ENCODE measurements at regions of chr5 and their contacts with region 1.

Region 1: GRCh38 chr5:157312492-157312891 is 46.6 kb downstream of the CYFIP2 start:
- DNase-seq: peak; percentile 55 to 71 (median 61)
- H3K4me3 ChIP-seq: no peak overlapping the region
- H3K4me3 Mint-ChIP-seq: peak overlapping the region in 1 of 8 donors; percentile 2
- H3K27ac ChIP-seq: no peak overlapping the region
- H3K27ac Mint-ChIP-seq: peak overlapping the region; percentile 24 to 94 (median 77)
- H3K4me1 ChIP-seq: peaks cover 33% of the 10 kb centered on the region
- H3K4me1 Mint-ChIP-seq: peaks cover 23 to 42% (median 34%) of the 10 kb centered on the region in 4 donors
- H3K27me3 ChIP-seq: no peaks in the 10 kb centered on the region
- H3K27me3 Mint-ChIP-seq: no peaks in the 10 kb centered on the region

Region 2: GRCh38 chr5:157189223-157189622 is 123.3 kb before region 1 on chr5:
- CTCF ChIA-PET with region 1: interaction called, 5 read pairs
- POLR2A ChIA-PET with region 1: interaction called, 13 read pairs
- intact Hi-C with region 1: no loop called
- DNase-seq: no peak
- H3K4me3 ChIP-seq: peak overlapping the region; percentile 44 to 59
- H3K4me3 Mint-ChIP-seq: peak overlapping the region; percentile 84 to 100 (median 96)
- H3K27ac ChIP-seq: peak overlapping the region; percentile 64
- H3K27ac Mint-ChIP-seq: peak overlapping the region; percentile 84 to 97 (median 93)
- H3K4me1 ChIP-seq: peaks cover 97% of the 10 kb centered on the region
- H3K4me1 Mint-ChIP-seq: peaks cover 66 to 91% (median 78%) of the 10 kb centered on the region in 4 donors
- H3K27me3 ChIP-seq: no peaks in the 10 kb centered on the region
- H3K27me3 Mint-ChIP-seq: no peaks in the 10 kb centered on the region

Region 3: GRCh38 chr5:157259699-157260098 is 52.8 kb before region 1 on chr5:
- CTCF ChIA-PET with region 1: interaction called, 237 read pairs
- POLR2A ChIA-PET with region 1: interaction called, 41 read pairs
- intact Hi-C with region 1: no loop called
- DNase-seq: no peak
- H3K4me3 ChIP-seq: no peak overlapping the region
- H3K4me3 Mint-ChIP-seq: peak overlapping the region in 4 of 8 donors; percentile 0 to 57 (median 20)
- H3K27ac ChIP-seq: no peak overlapping the region
- H3K27ac Mint-ChIP-seq: peak overlapping the region in 6 of 7 donors; percentile 3 to 76 (median 50)
- H3K4me1 ChIP-seq: peaks cover 61% of the 10 kb centered on the region
- H3K4me1 Mint-ChIP-seq: peaks cover 59 to 84% (median 76%) of the 10 kb centered on the region in 4 donors
- H3K27me3 ChIP-seq: no peaks in the 10 kb centered on the region
- H3K27me3 Mint-ChIP-seq: no peaks in the 10 kb centered on the region

Region 4: DNA sequence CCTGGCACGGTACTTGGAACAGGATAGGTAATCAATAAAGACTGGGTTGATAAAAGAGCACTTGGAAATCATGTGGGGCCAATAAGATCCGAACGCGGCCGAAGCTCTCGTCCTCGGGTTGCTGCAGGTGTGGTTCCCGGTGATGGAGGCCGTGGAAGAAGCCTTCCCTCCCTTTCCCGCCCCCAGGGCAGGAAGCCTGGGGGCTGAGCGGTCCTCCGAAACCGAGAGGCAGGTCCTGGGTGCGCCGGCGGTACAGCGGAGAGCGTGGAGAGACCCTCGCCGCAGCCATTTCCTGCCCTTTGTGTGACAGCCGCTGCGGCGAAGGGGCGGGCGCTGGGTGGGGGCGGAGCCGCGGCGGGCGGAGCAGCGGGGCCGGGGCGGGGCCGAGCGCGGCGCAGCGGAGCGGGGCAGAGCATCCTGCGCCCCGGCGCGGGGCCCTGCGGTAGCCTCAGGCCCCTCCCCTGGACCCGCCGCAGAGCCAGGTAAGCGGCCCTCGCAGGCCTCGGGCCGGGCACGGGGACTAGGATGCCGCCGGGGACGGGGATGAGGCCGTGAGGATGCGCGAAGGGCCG is 46.7 kb before region 1 on chr5 and contains the start of gene CYFIP2:
- CTCF ChIA-PET with region 1: interaction called, 15 read pairs
- POLR2A ChIA-PET with region 1: interaction called, 41 read pairs
- intact Hi-C with region 1: loop called (anchors 1 kb)
- DNase-seq: peak; percentile 84 to 88 (median 85)
- H3K4me3 ChIP-seq: peak within 1 kb of the TSS; percentile 62 to 75
- H3K4me3 Mint-ChIP-seq: peak within 1 kb of the TSS; percentile 95 to 100 (median 97)
- H3K27ac ChIP-seq: peak within 1 kb of the TSS; percentile 78
- H3K27ac Mint-ChIP-seq: peak within 1 kb of the TSS; percentile 97 to 99 (median 98)
- H3K4me1 ChIP-seq: peaks cover 65% of the 10 kb centered on the region
- H3K4me1 Mint-ChIP-seq: peaks cover 48 to 82% (median 66%) of the 10 kb centered on the region in 4 donors
- H3K27me3 ChIP-seq: no peaks in the 10 kb centered on the region
- H3K27me3 Mint-ChIP-seq: no peaks in the 10 kb centered on the region
- total RNA-seq, gene CYFIP2: 317 to 325 TPM

Region 5: GRCh38 chr5:157290981-157291711 is 21.3 kb before region 1 on chr5:
- CTCF ChIA-PET with region 1: interaction called, 11 read pairs
- POLR2A ChIA-PET with region 1: interaction called, 4 read pairs
- intact Hi-C with region 1: loop called (anchors 2 kb)
- DNase-seq: no peak
- H3K4me3 ChIP-seq: no peak overlapping the region
- H3K4me3 Mint-ChIP-seq: no peak overlapping the region
- H3K27ac ChIP-seq: no peak overlapping the region
- H3K27ac Mint-ChIP-seq: peak overlapping the region; percentile 22 to 83 (median 71)
- H3K4me1 ChIP-seq: peaks cover 53% of the 10 kb centered on the region
- H3K4me1 Mint-ChIP-seq: peaks cover 36 to 71% (median 49%) of the 10 kb centered on the region in 4 donors
- H3K27me3 ChIP-seq: no peaks in the 10 kb centered on the region
- H3K27me3 Mint-ChIP-seq: no peaks in the 10 kb centered on the region

Region 6: GRCh38 chr5:157328277-157328912 is 15.9 kb after region 1 on chr5:
- CTCF ChIA-PET with region 1: interaction called, 52 read pairs
- POLR2A ChIA-PET with region 1: interaction called, 3 read pairs
- intact Hi-C with region 1: no loop called
- DNase-seq: peak; percentile 66 to 69 (median 67)
- H3K4me3 ChIP-seq: no peak overlapping the region
- H3K4me3 Mint-ChIP-seq: peak overlapping the region; percentile 3 to 69 (median 58)
- H3K27ac ChIP-seq: peak overlapping the region; percentile 30
- H3K27ac Mint-ChIP-seq: peak overlapping the region; percentile 72 to 96 (median 89)
- H3K4me1 ChIP-seq: peaks cover 27% of the 10 kb centered on the region
- H3K4me1 Mint-ChIP-seq: peaks cover 23 to 44% (median 26%) of the 10 kb centered on the region in 4 donors
- H3K27me3 ChIP-seq: no peaks in the 10 kb centered on the region
- H3K27me3 Mint-ChIP-seq: no peaks in the 10 kb centered on the region

Region 7: DNA sequence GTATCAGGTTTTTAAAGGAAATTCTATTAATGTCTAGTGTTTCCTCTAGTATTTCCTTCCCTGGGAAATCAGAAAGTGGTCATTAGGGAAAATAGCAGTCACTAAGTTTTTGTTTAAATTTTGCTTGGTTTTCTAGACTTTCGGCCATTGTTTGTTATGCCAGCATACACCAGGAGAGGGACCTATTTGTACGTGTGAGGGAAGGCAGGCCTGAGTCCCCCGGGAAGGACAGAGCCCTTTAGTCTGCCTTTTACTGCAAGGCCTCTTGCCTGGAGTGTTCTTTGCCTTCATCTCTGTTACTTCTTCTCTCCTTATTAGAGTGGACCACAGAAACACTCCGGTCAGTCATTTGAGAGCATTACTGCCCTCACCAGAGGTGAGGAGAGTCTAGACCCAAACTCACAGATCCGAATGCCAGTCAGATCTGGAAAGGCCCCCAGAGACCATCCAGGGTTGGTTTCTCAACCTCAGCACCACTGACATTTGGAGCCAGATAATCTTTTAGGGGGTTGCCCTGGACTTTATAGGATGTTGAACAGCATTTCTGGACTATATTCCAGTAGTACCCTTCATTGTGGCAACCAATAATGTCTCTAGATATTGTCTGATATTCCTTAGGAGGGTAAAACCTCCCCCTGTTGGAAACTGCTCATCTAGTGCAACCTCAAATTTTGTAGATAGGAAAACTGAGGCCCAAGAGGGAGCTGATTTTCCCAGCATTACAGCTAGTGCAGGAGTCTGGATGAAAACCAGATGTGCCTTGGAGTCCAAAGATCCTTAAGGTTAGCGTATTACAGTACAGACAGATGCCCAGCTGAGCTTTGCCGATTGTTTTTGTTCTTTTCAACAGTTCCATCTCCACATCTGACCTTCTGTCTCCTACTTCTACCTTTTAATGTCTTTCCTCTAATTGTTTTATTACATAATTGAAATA is 54.5 kb after region 1 on chr5:
- CTCF ChIA-PET with region 1: no interaction called
- POLR2A ChIA-PET with region 1: no interaction called
- intact Hi-C with region 1: no loop called
- DNase-seq: no peak
- H3K4me3 ChIP-seq: no peak overlapping the region
- H3K4me3 Mint-ChIP-seq: no peak overlapping the region
- H3K27ac ChIP-seq: no peak overlapping the region
- H3K27ac Mint-ChIP-seq: peak overlapping the region in 6 of 7 donors; percentile 31 to 60 (median 46)
- H3K4me1 ChIP-seq: no peaks in the 10 kb centered on the region
- H3K4me1 Mint-ChIP-seq: peaks cover 0 to 7% (median 4%) of the 10 kb centered on the region in 4 donors
- H3K27me3 ChIP-seq: no peaks in the 10 kb centered on the region
- H3K27me3 Mint-ChIP-seq: no peaks in the 10 kb centered on the region

Measured in CD4-positive, alpha-beta memory T cell (primary cell).